Right cardiac atrium (tissue), 5 donors: ENCODE measurements at regions of chr10 and their contacts with region 1.

Region 1: DNA sequence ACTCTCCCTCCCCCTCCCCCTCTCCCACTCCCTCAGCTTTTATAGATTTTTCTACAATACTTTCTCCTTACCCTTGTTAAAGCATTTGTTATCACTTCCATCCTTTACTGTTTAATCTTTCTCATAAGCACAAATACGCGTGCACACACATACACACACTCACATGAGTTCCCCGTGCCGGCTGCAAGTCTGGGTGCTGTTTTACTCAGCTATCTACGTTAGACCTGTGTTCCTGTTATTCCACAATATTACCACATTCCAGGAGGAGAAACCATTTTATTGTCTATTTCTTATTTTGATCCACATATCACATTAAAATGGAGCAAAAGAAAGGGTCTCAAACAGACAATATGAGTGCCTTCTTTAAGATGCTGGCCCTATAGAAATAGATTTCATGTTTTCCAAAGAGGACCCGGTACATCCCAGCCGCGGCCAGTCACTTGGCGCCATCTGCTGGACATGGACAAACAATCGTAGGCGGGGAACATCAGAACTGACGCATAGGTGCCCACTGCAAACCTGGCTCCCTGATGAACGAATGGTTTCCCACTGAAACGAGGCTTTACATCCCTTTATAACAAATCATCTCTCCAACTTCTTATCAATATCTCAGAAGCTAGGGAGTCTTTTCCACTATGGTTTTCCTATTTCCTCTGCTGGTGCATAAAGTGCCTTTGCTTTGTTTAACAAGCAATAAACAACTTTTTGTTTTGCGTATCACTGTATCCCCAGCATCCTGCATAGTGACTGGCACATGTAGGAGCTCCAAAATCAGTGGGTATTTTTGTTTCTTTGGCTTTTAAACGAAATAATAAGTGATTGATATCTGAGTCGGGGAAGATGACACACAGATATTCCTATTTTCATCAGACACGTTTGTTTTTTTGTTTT is 25.2 kb upstream of the OPTN start:
- DNase-seq: peak; percentile 67 to 85 (median 78)
- ATAC-seq: peak; percentile 80
- H3K4me3 ChIP-seq: no peak overlapping the region
- H3K27ac ChIP-seq: no peak overlapping the region
- H3K4me1 ChIP-seq: no peaks in the 10 kb centered on the region
- H3K27me3 ChIP-seq: no peaks in the 10 kb centered on the region

Region 2: DNA sequence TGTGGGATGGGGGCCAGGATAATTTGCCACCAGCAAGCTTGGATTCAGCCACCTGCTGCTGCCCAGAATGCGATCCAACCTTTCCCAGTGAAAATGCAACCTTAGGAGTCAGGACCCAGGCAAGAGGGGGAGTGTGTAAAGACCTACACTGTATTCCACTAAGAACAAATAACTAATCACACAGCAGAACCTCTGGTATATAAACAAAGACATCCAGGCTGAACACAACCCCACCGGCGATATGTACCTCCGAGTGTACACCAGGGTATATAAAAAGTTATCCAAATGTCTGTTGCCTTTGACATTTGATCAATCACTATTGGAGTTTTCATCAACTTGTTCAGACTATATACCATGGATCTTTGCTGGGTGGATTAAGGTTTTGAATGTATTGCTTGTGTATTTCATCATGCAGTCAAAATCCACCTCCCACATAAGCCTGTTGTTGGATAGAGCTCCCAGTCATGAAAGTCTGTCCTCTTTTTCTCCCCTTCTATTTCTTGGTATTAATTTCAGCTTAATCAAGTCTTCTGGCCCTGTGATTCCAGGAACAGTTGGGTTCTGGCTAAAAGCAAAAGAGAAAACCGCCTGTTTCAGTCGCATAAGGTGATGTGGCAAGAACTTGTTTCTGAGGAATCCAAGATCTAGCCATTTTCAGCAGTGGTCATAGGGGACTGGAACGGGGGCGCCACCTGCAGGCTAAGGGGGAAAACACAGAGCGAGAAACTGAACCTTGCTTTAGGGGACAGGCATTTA is 364.0 kb before region 1 on chr10:
- intact Hi-C with region 1: loop called in 2 of 4 experiments (anchors 5 to 10 kb)
- DNase-seq: peak; percentile 71 to 89 (median 85)
- ATAC-seq: peak; percentile 68 to 73
- H3K4me3 ChIP-seq: no peak overlapping the region
- H3K27ac ChIP-seq: no peak overlapping the region
- H3K4me1 ChIP-seq: peaks cover 7% of the 10 kb centered on the region
- H3K27me3 ChIP-seq: no peaks in the 10 kb centered on the region